IMR-90 (cell line): ENCODE measurements at regions of chr11 and their contacts with region 1.

Region 1: GRCh38 chr11:2036863-2037486 is 39.3 kb upstream of the H19 start:
- DNase-seq: no peak
- ATAC-seq: peak; percentile 88
- H3K4me3 ChIP-seq: no peak overlapping the region
- H3K27ac ChIP-seq: no peak overlapping the region
- H3K4me1 ChIP-seq: no peaks in the 10 kb centered on the region
- H3K27me3 ChIP-seq: no peaks in the 10 kb centered on the region
- CTCF ChIP-seq: no peak
- POLR2A ChIP-seq: no peak
- RAD21 ChIP-seq: no peak

Region 2: GRCh38 chr11:2137202-2138071 is 100.5 kb after region 1 on chr11:
- CTCF ChIA-PET with region 1: no interaction called
- POLR2A ChIA-PET with region 1: interaction called, 15 read pairs
- dilution Hi-C with region 1: no loop called
- in situ Hi-C with region 1: no loop called
- intact Hi-C with region 1: no loop called
- DNase-seq: peak; percentile 48
- ATAC-seq: peak; percentile 81
- H3K4me3 ChIP-seq: peak overlapping the region; percentile 44
- H3K27ac ChIP-seq: no peak overlapping the region
- H3K4me1 ChIP-seq: no peaks in the 10 kb centered on the region; the same call in 1 of the 2 replicates
- H3K27me3 ChIP-seq: peaks cover 66% of the 10 kb centered on the region
- CTCF ChIP-seq: no peak
- POLR2A ChIP-seq: no peak
- RAD21 ChIP-seq: no peak